CD14-positive monocyte (primary cell): ENCODE measurements at regions of chr22 and their contacts with region 1.

Region 1: GRCh38 chr22:30183861-30184278 is 62.7 kb downstream of the LIF start:
- DNase-seq: peak in 1 of 3 donors; percentile 34
- H3K4me3 ChIP-seq: no peak overlapping the region
- H3K4me3 Mint-ChIP-seq: no peak overlapping the region
- H3K27ac ChIP-seq: no peak overlapping the region
- H3K27ac Mint-ChIP-seq: peak overlapping the region in 1 of 7 donors; percentile 36
- H3K4me1 ChIP-seq: peaks cover 0 to 9% of the 10 kb centered on the region in 2 donors
- H3K4me1 Mint-ChIP-seq: peaks cover 22% of the 10 kb centered on the region
- H3K27me3 ChIP-seq: no peaks in the 10 kb centered on the region
- H3K27me3 Mint-ChIP-seq: peaks cover 0 to 4% (median 3%) of the 10 kb centered on the region in 3 donors
- CTCF ChIP-seq: no peak

Region 2: GRCh38 chr22:30114361-30114760 is 69.5 kb before region 1 on chr22:
- intact Hi-C with region 1: loop called in 1 of 2 experiments (anchors 5 kb)
- DNase-seq: no peak
- H3K4me3 ChIP-seq: no peak overlapping the region
- H3K4me3 Mint-ChIP-seq: no peak overlapping the region
- H3K27ac ChIP-seq: no peak overlapping the region
- H3K27ac Mint-ChIP-seq: no peak overlapping the region
- H3K4me1 ChIP-seq: no peaks in the 10 kb centered on the region
- H3K4me1 Mint-ChIP-seq: peaks cover 3% of the 10 kb centered on the region
- H3K27me3 ChIP-seq: no peaks in the 10 kb centered on the region
- H3K27me3 Mint-ChIP-seq: peaks cover 0 to 8% (median 1%) of the 10 kb centered on the region in 3 donors
- CTCF ChIP-seq: no peak

Region 3: DNA sequence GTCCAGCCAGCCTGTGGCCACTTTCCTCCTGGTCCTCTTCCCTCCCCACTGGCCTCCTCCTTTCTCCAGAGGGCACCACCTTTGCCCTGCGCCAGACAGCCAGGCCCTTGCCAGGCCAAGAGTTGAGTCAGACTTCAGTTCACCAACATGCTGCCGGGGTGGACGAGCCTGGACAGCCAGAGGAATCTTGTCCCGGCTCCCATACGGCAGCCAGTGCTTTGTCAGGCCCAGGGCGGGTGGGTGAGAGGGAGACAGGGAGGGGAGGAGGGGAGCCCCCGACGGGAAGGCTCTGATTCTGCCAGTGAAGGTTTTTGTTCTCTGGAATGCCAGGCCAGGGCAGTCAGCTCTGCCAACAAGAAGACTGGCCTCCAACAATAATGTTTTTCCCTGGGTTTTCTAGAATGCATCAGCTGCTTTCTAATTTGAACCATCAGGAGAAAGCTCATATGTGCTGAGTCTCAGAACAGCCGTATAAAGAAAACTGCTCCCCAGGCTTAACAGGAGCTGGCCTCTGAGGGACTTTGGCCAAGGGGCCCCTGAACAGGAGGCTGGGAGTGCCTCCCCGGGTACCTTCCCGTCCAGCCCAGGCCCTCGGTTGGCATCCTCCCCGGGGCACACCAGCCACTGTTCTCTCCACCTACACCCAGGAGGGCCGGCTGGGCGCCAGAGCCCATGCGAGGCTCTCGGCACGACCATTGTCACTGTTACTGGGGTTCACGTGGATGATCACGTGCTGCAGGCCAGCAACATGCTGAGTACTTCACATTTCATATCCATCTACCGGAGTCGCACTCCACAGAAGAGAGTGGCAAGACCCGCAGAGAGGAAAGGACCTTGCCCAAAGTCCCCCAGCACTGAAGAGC is 34.1 kb after region 1 on chr22:
- intact Hi-C with region 1: loop called (anchors 5 kb)
- DNase-seq: no peak
- H3K4me3 ChIP-seq: no peak overlapping the region
- H3K4me3 Mint-ChIP-seq: no peak overlapping the region
- H3K27ac ChIP-seq: no peak overlapping the region
- H3K27ac Mint-ChIP-seq: peak overlapping the region in 1 of 7 donors; percentile 26
- H3K4me1 ChIP-seq: peaks cover 19 to 27% of the 10 kb centered on the region in 2 donors
- H3K4me1 Mint-ChIP-seq: peaks cover 22% of the 10 kb centered on the region
- H3K27me3 ChIP-seq: peaks cover 0 to 20% of the 10 kb centered on the region in 2 donors
- H3K27me3 Mint-ChIP-seq: peaks cover 31 to 35% (median 33%) of the 10 kb centered on the region in 3 donors
- CTCF ChIP-seq: no peak